AG04450 (cell line): ENCODE measurements at regions of chr9 and their contacts with region 1.

Region 1: DNA sequence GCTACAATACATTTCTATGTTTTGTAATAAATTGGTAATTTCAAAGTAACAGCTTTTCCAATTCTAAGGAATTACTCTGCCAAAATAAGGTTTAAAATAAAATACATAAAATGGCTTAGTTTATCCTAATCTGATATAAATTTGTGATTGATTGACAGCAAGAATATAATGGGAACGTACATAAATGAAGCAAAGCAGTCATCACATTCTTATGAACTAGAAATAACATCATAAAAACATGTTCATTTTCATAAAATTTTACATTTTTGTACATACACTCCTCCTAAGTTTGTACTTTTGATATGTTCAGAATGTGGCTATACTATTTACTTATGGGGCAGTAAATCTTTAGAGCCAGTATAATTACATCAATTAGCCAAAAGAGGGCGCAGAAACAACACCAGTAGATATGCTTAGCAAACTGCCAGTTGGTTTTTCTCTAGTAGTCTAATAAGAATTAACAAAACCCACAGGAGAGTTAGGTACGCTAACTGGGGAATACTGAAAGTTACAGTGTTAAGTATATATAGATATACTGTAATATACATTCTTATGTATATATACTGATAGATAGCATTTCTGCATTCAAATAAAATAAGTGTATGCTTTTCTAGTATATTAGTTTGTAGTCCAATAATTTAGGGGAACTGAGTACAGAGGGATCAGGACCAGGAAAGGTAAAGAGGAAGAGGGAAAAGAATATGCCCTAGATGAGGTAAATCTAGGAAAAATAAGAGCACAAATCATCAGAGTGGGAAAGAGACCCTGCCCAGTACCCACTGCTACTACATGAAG is 76.8 kb downstream of the ZDHHC21 start:
- DNase-seq: peak; percentile 42
- H3K4me3 ChIP-seq: no peak overlapping the region
- H3K27ac ChIP-seq: no peak overlapping the region
- H3K27me3 ChIP-seq: no peaks in the 10 kb centered on the region
- CTCF ChIP-seq: peak; percentile 78

Region 2: DNA sequence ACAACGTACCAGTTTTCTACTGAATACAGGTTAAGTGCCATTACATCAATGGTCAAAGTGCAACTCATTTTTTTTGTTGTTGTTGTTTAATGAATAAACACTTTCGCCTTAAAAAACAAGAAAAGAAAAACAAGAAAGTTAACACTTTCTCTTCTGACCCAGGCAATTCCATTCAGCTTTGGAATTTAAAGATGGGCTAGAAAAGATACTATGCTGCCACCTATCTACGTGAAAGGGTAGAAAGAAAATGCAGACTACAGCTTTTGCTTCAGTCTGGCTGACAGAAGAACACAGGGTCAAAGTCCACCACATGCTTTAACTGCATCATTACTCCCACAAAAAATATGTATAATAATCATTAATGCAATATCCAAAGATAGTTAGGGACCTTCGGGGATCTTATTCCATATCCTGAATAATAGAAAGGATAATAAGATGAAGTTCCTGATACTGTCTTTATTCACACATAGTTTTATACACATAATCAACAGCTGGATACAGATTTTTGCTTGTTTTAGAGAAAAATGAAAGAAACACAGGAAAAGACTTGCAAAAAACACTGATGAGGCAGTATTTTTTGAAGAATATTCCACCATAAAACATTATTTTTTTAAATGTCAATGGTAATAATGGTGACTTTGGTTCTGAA is 36.5 kb after region 1 on chr9:
- CTCF ChIA-PET with region 1: interaction called, 23 read pairs
- POLR2A ChIA-PET with region 1: no interaction called
- DNase-seq: no peak
- H3K4me3 ChIP-seq: no peak overlapping the region
- H3K27ac ChIP-seq: no peak overlapping the region
- H3K27me3 ChIP-seq: no peaks in the 10 kb centered on the region
- CTCF ChIP-seq: peak; percentile 69

Region 3: DNA sequence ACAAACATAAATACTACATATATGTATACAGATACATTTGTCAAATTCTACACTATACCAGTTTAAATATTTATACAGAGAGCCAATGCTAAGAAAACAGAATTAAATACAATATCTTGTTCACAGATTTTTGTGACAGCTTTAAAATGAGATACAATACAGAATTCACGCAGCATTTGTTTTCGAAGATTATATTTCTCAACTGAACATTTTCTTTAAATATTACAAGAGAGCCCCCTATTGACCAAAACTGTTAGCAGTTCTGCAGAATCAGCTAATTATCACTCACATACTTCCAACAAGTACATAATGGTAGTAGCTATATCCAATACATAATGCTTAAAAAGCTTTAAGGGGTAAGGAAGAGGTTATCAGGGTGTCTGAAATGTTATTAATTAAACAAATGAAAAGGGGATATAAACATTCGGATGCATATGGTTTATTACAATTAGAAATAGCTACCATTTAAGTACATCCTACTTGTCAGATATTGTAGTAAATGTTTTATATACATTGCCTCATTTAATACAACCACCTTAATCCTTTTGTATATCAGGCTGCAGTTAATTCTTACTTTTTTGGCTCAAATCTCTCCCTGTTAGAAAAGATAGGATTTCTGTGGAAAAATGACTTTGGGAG is 45.2 kb after region 1 on chr9:
- CTCF ChIA-PET with region 1: interaction called, 34 read pairs
- POLR2A ChIA-PET with region 1: no interaction called
- DNase-seq: peak; percentile 4
- H3K4me3 ChIP-seq: no peak overlapping the region
- H3K27ac ChIP-seq: no peak overlapping the region
- H3K27me3 ChIP-seq: no peaks in the 10 kb centered on the region
- CTCF ChIP-seq: peak; percentile 65

Region 4: DNA sequence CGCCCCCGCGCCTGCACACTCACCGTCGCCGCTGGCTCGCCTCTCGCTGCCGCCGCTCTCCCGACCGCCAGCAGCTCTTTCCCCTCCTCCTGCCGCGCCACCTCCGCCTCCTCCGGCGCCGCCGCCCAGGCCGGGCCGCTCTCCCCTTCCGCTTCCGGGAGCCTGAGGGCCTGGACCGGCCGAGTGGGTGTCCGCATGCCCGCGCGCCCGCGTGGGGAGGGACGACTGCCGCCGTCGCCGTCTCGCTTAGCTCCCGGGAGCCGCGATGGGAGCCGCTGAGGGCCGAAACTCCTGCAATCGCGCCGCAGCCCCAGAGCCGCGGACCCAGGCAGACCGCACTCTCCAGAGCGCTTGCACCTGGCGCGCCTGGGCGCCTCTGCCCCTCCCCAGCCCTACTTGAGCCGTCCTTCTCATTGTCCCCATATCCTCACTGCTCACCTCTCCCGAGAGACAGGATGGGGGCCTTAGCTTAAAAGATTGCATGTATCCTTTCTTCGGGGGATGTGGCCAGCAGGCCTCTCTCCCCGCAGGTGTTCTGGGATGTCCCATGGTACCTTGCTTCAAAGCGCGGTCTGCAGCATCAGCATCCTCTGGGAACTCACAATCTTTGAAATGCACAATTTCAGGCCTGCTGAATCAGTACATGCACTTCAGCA is 76.9 kb after region 1 on chr9 and contains the start of gene ZDHHC21:
- CTCF ChIA-PET with region 1: no interaction called
- POLR2A ChIA-PET with region 1: no interaction called
- DNase-seq: no peak
- H3K4me3 ChIP-seq: peak within 1 kb of the TSS; percentile 85
- H3K27ac ChIP-seq: no peak within 1 kb of the TSS
- H3K27me3 ChIP-seq: peaks cover 6% of the 10 kb centered on the region
- CTCF ChIP-seq: no peak
- polyA plus RNA-seq, gene ZDHHC21: 4.7 and 6.6 TPM in 2 replicates

Region 5: DNA sequence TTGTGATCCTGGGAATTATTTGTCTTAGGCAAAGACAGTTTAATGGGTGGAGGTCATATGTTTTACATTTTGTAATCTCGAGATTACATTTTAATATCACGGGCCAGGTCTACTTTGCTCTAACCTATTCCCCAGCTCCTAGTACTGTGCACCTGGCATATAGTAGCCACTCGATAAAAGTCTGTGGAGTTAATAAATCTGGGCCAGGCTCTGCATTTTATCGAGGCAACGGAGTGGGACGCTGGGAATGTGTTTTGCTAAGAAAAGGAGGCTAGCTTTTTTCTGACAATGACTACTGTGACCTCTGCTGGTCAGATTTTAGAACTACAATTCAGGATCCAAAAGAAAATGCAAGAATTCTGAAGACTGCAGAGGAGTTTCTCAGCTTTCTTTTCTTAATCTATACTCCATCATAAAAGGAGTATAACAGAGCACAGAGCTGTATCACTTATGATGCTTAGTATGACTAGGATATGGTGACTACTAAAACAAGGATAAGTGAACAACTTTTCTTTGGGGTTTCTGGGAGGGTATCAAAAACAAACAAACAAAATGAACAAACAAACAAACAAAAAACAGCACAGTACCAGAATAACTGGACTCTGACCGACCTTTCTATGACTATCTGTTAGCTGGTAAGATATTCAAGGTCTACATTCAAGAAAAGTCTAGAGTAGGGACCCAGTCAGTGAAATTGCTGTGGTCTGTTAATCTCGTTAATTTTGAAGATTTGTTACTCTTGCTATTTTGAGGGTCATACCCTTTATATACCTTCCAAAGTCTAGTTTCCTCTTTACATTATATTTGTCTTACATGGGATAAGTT is 152.2 kb after region 1 on chr9:
- CTCF ChIA-PET with region 1: interaction called, 19 read pairs
- POLR2A ChIA-PET with region 1: no interaction called
- DNase-seq: peak; percentile 21
- H3K4me3 ChIP-seq: no peak overlapping the region
- H3K27ac ChIP-seq: no peak overlapping the region
- H3K27me3 ChIP-seq: no peaks in the 10 kb centered on the region
- CTCF ChIP-seq: peak; percentile 78

Region 6: DNA sequence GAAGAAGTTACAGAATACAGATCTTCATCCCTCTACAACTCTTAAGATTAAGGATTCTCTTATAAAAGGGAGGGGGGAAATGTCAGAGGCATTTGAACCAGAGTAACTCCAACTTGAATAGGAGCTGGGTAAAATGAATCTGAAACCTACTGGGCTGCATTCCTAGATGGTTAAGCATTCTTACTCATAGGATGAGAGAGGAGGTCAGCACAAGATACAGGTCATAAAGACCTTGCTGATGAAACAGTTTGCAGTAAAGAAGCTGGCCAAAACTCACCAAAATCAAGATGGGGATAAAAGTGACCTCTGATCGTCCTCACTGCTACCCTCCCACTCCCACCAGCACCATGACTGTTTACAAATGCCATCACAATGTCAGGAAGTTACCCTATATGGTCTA is 279.5 kb after region 1 on chr9:
- CTCF ChIA-PET with region 1: no interaction called
- POLR2A ChIA-PET with region 1: no interaction called
- DNase-seq: no peak
- H3K4me3 ChIP-seq: no peak overlapping the region
- H3K27ac ChIP-seq: no peak overlapping the region
- H3K27me3 ChIP-seq: no peaks in the 10 kb centered on the region
- CTCF ChIP-seq: no peak